ENCODE measurements at regions of chr19 and their contacts with region 1.

Region 1: GRCh38 chr19:43784981-43785808 is 4.4 kb upstream of the KCNN4 start:
- DNase-seq: no peak
- H3K4me3 ChIP-seq: peak overlapping the region in 2 of 4 donors; percentile 2 to 35
- H3K27ac ChIP-seq: peak overlapping the region in 2 of 4 donors; percentile 34 to 54
- H3K4me1 ChIP-seq: peaks cover 8 to 19% (median 15%) of the 10 kb centered on the region in 4 donors
- H3K27me3 ChIP-seq: peaks cover 0 to 52% (median 0%) of the 10 kb centered on the region in 4 donors
- CTCF ChIP-seq: peak; percentile 92 to 98 (median 94)
- EP300 ChIP-seq: no peak
- POLR2A ChIP-seq: no peak

Region 2: DNA sequence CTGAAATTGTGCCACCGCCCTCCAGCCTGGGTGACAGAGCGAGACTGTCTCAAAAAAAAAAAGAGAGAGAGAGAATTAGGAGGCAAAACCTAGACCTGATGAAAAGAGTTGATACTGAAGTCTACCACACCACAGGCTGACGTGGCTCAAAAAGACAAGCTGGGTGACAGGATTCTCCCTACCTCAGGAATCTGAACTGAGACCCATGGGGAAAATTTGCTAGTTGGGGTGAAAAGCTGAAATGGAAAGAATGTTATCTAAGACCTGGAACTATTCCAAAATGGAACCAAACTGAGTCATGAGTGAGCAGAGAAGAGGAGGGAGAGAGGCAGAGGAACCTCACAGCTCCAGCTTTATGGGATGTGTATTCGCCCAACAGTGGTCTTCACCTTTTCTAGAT is 42.2 kb before region 1 on chr19:
- intact Hi-C with region 1: loop called (anchors 1 kb)
- DNase-seq: no peak
- H3K4me3 ChIP-seq: no peak overlapping the region
- H3K27ac ChIP-seq: no peak overlapping the region
- H3K4me1 ChIP-seq: peaks cover 0 to 14% (median 10%) of the 10 kb centered on the region in 4 donors
- H3K27me3 ChIP-seq: no peaks in the 10 kb centered on the region
- CTCF ChIP-seq: no peak
- EP300 ChIP-seq: no peak
- POLR2A ChIP-seq: no peak